Ascending aorta (tissue), 2 donors: ENCODE measurements at regions of chr2 and their contacts with region 1.

Region 1: DNA sequence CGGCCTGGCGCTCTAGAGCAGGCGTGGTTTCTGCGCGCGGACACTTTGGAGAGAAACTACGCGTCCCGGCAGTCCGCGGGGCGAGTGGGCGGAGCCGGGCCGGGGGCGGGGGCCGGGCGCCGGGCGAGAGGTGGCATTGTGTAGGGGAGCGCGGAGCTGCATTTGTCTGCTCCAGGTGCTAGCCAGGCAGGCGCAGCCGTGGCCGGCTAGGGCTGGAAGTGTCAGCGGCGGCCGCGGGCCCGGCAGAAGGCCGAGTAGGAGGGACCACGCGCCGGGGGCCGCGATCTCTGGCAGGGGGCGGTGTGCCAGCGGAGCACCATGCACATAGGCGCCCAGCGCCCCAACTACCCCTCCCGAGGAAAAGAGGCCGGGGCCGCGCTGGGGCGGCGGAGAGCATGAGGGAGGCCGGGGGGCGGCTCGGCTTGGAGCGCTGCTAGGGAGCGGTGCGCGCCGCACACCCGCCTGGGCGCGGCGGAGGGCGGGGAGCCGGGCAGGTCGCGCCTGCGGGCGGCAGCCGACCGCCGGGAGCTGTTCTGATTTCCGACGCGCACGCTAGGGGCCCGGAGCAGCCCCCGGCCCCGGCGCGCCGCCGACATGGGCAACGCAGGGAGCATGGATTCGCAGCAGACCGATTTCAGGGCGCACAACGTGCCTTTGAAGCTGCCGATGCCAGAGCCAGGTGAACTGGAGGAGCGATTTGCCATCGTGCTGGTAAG is at the start of gene FMNL2:
- DNase-seq: peak; percentile 58 to 92
- H3K4me3 ChIP-seq: peak within 1 kb of the TSS; percentile 94 to 95
- H3K27ac ChIP-seq: peak within 1 kb of the TSS; percentile 87 to 92
- H3K4me1 ChIP-seq: peaks cover 2 to 7% of the 10 kb centered on the region in 2 donors
- H3K27me3 ChIP-seq: no peaks in the 10 kb centered on the region
- CTCF ChIP-seq: peak in 1 of 3 experiments; percentile 19
- total RNA-seq, gene FMNL2: 12.0 TPM

Region 2: DNA sequence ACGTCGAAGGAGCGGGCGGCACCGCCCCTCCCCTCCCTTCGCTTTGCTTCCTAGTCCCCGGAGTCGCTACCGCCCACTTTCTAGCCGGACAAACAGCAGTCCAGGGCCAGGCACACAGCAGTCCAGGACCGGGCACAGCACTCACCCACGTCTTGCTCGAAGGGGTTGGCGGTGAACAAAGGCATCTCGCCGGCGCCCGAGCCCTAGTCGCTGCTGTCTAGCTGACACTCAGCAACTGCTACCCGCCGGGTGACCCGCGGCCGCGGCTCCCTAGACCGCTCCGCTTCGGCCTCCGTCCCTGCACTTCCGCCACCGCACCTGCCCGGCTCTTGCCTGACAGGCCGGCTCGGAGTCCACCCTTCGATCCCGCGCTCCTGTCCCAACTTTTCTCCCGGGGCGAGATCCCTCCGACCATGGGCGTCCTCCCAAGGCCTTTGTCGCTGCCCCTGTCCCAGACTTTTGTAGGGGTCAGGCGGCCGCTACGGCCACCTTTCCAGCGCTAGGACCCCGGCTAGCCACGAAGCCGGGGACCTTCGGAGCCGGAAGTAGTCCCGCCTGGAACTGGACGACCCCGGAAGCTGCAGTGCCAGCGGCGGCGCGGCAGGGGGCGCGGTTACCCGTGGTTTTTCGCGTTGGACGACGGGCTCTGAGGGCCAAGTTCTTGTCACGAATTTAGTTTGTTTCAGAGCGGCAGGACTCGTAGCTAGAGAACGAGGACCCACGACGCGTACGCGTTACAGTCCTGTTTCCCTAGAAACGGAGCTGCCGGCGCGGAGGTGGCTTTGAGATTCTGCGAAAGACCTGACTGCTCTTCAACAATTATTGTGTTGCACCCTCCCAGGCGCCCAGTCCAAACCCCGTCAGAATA is 159.5 kb before region 1 on chr2 and contains the start of gene STAM2:
- intact Hi-C with region 1: loop called (anchors 10 kb)
- DNase-seq: peak; percentile 64 to 96
- H3K4me3 ChIP-seq: peak within 1 kb of the TSS; percentile 75 to 99
- H3K27ac ChIP-seq: peak within 1 kb of the TSS; percentile 92 to 99
- H3K4me1 ChIP-seq: peaks cover 3 to 15% of the 10 kb centered on the region in 2 donors
- H3K27me3 ChIP-seq: no peaks in the 10 kb centered on the region
- CTCF ChIP-seq: peak; percentile 93 to 98 (median 94)
- total RNA-seq, gene STAM2: 4.0 TPM

Region 3: DNA sequence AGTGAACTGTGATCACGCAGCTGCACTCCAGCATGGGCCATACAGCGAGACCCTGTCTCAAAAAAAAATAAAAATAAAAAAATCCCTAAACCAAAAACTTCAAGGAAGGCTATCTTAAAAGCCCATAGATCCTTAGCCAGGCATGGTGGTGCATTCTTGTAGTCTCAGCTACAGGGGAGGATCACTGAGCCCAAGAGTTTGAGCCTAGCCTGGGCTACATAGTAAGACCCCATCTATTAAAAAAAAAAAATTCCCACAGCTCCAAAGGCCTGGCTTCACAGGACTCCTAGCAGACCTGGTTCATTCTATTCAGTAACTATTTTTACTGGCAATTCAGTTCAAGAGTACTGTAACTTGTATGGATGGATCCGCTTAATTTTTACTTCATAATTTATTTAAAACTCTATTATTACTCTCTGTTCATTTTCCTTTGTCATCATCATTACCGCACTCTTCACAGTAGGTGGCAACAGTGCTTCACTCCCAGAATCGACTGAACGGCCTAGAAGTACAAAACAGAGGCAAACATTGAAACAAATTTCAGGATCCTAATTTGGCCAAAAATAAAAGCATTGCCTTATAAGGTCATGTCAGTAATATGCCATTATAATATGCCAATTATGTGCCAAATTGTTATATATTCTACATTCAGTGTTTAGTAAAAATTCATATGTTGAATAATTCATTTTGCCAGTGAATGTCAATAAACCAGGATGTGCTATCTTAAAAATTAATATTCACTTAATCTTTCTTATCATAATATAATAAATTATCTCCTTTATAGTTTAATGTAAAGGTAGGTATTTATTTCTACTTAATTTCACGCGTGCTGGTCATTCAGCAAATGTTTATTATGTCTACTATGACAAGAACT is 145.3 kb before region 1 on chr2:
- intact Hi-C with region 1: loop called (anchors 5 kb)
- DNase-seq: no peak
- H3K4me3 ChIP-seq: no peak overlapping the region
- H3K27ac ChIP-seq: no peak overlapping the region
- H3K4me1 ChIP-seq: no peaks in the 10 kb centered on the region
- H3K27me3 ChIP-seq: no peaks in the 10 kb centered on the region
- CTCF ChIP-seq: peak; percentile 75 to 88 (median 88)

Region 4: GRCh38 chr2:152395103-152395502 is 59.9 kb after region 1 on chr2:
- intact Hi-C with region 1: no loop called
- DNase-seq: no peak
- H3K4me3 ChIP-seq: peak overlapping the region in 1 of 2 donors; percentile 59
- H3K27ac ChIP-seq: peak overlapping the region; percentile 60 to 82
- H3K4me1 ChIP-seq: peaks cover 3 to 14% of the 10 kb centered on the region in 2 donors
- H3K27me3 ChIP-seq: no peaks in the 10 kb centered on the region
- CTCF ChIP-seq: no peak

Region 5: GRCh38 chr2:152407204-152407721 is 72.1 kb after region 1 on chr2:
- intact Hi-C with region 1: loop called (anchors 5 kb)
- DNase-seq: peak in 1 of 2 donors; percentile 76
- H3K4me3 ChIP-seq: peak overlapping the region; percentile 29 to 40
- H3K27ac ChIP-seq: peak overlapping the region; percentile 59 to 85
- H3K4me1 ChIP-seq: peaks cover 27 to 67% of the 10 kb centered on the region in 2 donors
- H3K27me3 ChIP-seq: no peaks in the 10 kb centered on the region
- CTCF ChIP-seq: no peak

Region 6: GRCh38 chr2:152542995-152543481 is 207.9 kb after region 1 on chr2:
- intact Hi-C with region 1: loop called (anchors 5 kb)
- DNase-seq: peak in 1 of 2 donors; percentile 68
- H3K4me3 ChIP-seq: no peak overlapping the region
- H3K27ac ChIP-seq: peak overlapping the region; percentile 63 to 72
- H3K4me1 ChIP-seq: peaks cover 3 to 15% of the 10 kb centered on the region in 2 donors
- H3K27me3 ChIP-seq: no peaks in the 10 kb centered on the region
- CTCF ChIP-seq: no peak

Region 7: DNA sequence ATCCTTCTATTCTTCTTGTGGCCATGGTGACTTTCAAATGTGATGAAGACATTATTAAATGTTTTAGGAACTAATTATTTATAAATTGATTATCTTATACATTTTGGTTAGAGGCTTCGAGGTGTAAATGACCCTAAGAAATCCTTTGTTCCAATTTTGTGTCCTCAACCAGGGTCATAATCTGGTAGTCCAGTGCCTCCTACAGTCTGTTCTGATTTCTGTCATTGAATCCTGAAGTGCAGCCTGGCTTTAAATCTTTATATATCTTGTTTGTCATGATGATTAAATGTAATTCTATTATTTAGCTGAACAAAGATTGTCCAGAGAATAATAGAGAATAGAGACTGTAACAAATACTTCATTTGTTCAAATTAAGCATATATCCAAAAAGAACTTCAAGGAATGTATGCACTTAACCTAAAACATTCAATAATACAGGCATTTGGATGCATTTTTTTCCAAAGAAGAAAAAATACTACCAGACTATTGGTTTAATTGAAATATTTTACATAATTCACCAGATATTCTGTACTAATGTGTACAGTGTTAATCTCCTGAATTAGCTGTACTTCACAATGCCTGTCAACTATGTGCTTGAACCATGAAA is 292.3 kb after region 1 on chr2:
- intact Hi-C with region 1: loop called (anchors 5 kb)
- DNase-seq: no peak
- H3K4me3 ChIP-seq: no peak overlapping the region
- H3K27ac ChIP-seq: peak overlapping the region in 1 of 2 donors; percentile 5
- H3K4me1 ChIP-seq: peaks cover 0 to under 1% of the 10 kb centered on the region in 2 donors
- H3K27me3 ChIP-seq: no peaks in the 10 kb centered on the region
- CTCF ChIP-seq: peak; percentile 47 to 76 (median 57)

Region 8: DNA sequence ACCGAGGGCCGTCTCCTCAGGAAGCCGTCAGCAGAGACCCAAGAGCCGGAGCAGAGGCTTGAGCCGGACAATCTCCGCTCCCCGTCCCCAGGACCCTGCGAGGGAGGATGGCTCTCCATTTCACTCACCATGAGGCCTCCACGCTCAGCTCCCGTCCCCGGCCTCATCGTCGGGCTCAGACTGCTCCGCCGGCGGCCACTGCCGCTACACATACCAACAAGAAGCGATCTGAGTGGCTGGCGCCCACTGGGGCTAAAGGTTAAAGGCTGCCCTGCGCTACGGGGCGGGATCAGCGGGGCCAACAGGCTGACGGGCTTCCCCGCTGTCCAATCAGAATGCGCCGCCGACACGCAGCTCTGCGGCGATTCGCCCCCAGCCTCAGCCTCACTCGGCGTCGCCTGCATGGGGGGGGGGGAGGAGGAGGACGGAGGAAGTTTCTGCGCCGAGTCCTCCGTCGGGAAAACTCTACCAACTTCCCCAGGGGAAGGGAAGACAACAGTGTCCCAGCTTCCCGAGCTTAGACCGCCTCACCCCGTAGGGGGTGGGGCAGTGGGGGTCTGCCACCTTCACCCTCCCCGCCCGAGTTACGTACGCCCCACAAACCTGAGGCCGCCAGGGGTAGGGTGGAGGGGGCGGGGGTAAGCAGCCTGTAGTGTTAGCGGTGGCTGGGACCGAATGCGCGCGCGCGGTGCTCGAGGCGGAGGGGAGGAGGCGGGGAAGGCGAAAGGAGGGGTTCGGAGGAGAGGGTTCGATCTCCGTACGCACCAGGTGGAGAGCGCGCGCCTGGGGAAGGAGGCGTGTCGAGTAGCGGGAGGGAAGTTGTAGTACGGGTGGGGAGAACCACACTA is 382.3 kb after region 1 on chr2 and contains the start of gene PRPF40A:
- intact Hi-C with region 1: loop called (anchors 5 kb)
- DNase-seq: peak; percentile 95 to 99
- H3K4me3 ChIP-seq: peak within 1 kb of the TSS; percentile 83 to 96
- H3K27ac ChIP-seq: peak within 1 kb of the TSS; percentile 93 to 98
- H3K4me1 ChIP-seq: peaks cover 0 to 32% of the 10 kb centered on the region in 2 donors
- H3K27me3 ChIP-seq: no peaks in the 10 kb centered on the region
- CTCF ChIP-seq: no peak
- total RNA-seq, gene PRPF40A: 28.9 TPM